ENCODE measurements at regions of chr16 and their contacts with region 1.

Region 1: DNA sequence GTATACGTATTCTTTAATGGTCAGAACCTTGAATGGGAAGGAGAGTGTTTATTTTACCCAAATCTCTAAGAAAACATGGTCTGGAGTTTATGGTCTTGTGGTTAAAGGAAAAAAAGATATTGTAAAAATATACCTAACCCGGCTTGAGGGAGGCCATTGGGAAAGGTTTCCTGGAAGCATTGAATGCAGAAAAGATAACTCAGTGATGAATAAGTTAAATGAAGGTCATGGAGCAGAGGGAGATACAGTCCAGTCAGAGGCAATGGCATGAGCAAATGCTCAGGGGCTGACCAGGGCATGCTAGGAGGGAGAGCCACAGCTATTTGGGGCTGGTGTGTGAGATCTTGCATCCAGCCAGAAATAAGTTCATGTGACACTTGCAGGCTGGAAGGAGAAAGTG is 430.4 kb upstream of the CDH5 start:
- DNase-seq: no peak
- ATAC-seq: no peak
- H3K4me3 ChIP-seq: no peak overlapping the region
- H3K27ac ChIP-seq: no peak overlapping the region
- H3K4me1 ChIP-seq: no peaks in the 10 kb centered on the region
- H3K27me3 ChIP-seq: peaks cover 6% of the 10 kb centered on the region; the same call in 1 of the 2 replicates
- CTCF ChIP-seq: no peak
- POLR2A ChIP-seq: no peak
- RAD21 ChIP-seq: no peak

Region 2: DNA sequence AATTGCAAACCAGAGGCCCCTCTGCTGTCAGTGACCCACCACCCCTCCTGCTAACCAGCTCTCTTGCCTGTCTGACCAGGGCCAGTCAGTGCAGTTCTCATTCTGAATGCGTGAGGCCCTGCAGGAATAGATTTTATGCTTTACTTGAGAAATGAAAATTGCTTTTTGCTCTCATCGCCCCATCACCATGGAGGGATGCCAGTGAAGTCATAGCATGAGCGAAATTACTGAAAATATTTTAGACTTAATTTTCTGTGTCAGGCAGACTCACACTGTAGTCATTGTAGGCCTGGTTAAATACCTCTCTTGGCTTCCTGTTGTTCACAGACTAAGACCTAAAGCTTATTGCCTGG is 60.1 kb before region 1 on chr16:
- CTCF ChIA-PET with region 1: no interaction called
- POLR2A ChIA-PET with region 1: no interaction called
- RAD21 ChIA-PET with region 1: no interaction called
- intact Hi-C with region 1: loop called (anchors 10 kb)
- DNase-seq: no peak
- ATAC-seq: no peak
- H3K4me3 ChIP-seq: no peak overlapping the region
- H3K27ac ChIP-seq: no peak overlapping the region
- H3K4me1 ChIP-seq: no peaks in the 10 kb centered on the region
- H3K27me3 ChIP-seq: no peaks in the 10 kb centered on the region
- CTCF ChIP-seq: no peak
- POLR2A ChIP-seq: no peak
- RAD21 ChIP-seq: no peak

Measured in HCT116 (cell line).